ENCODE measurements at regions of chr3 and their contacts with region 1.

Region 1: GRCh38 chr3:48966876-48967361 is 23.1 kb upstream of the P4HTM start:
- DNase-seq: no peak
- ATAC-seq: peak; percentile 44 to 45
- H3K4me3 ChIP-seq: no peak overlapping the region
- H3K27ac ChIP-seq: no peak overlapping the region
- H3K4me1 ChIP-seq: no peaks in the 10 kb centered on the region
- H3K27me3 ChIP-seq: no peaks in the 10 kb centered on the region

Region 2: GRCh38 chr3:48877671-48878070 is 89.2 kb before region 1 on chr3:
- intact Hi-C with region 1: loop called in 1 of 4 experiments (anchors 10 kb)
- DNase-seq: no peak
- ATAC-seq: no peak
- H3K4me3 ChIP-seq: no peak overlapping the region
- H3K27ac ChIP-seq: no peak overlapping the region
- H3K4me1 ChIP-seq: no peaks in the 10 kb centered on the region
- H3K27me3 ChIP-seq: no peaks in the 10 kb centered on the region

Region 3: DNA sequence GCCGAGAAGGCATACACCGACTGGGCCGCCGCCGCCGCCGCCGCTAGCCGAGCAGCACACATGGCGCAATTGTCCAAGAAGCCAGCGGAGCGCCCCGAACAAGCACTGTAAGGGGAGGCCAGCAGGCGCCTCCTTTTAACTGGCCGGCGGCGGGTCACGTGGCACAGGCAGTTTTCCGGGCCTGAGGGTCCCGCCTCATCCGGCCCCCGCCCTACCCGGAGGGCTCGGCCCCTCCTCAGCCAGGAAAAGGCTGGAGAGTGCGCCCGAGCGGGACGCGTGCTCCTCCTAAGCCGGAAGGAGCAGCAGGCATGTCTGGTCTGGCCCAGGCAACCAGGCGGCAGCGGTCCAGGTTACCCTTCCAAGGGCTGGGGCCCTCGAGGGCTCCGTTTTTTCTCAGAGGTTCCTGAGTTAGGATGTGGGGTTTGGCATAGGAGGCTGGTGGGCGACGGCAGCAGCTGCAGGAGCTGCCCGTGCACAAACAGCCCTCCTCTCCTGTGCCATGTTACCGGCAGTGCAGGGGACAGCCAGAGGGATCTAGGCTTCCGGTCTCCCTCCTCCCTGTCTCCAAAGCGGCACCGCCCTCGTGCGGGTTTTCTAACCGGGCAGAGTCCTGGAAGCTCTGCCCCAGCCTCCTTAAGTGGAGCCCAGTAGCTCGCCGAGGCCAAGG is 391.4 kb after region 1 on chr3 and contains the start of gene GPX1:
- intact Hi-C with region 1: no loop called
- DNase-seq: peak; percentile 97 to 99 (median 98)
- ATAC-seq: peak; percentile 96 to 97
- H3K4me3 ChIP-seq: peak within 1 kb of the TSS; percentile 68
- H3K27ac ChIP-seq: peak within 1 kb of the TSS; percentile 93
- H3K4me1 ChIP-seq: peaks cover 4% of the 10 kb centered on the region
- H3K27me3 ChIP-seq: no peaks in the 10 kb centered on the region
- total RNA-seq, gene GPX1: 153 to 254 (median 196) TPM

Measured in right cardiac atrium (tissue), 5 donors.